Caco-2 (cell line): ENCODE measurements at regions of chr6 and their contacts with region 1.

Region 1: GRCh38 chr6:104795363-104795762 is 64.4 kb downstream of the HACE1 start:
- DNase-seq: peak in 1 of 2 experiments; percentile 28
- H3K4me3 ChIP-seq: no peak overlapping the region
- H3K4me3 Mint-ChIP-seq: no peak overlapping the region
- H3K27ac Mint-ChIP-seq: no peak overlapping the region
- H3K4me1 ChIP-seq: no peaks in the 10 kb centered on the region
- H3K4me1 Mint-ChIP-seq: no peaks in the 10 kb centered on the region
- H3K27me3 ChIP-seq: no peaks in the 10 kb centered on the region
- H3K27me3 Mint-ChIP-seq: no peaks in the 10 kb centered on the region
- CTCF ChIP-seq: no peak

Region 2: DNA sequence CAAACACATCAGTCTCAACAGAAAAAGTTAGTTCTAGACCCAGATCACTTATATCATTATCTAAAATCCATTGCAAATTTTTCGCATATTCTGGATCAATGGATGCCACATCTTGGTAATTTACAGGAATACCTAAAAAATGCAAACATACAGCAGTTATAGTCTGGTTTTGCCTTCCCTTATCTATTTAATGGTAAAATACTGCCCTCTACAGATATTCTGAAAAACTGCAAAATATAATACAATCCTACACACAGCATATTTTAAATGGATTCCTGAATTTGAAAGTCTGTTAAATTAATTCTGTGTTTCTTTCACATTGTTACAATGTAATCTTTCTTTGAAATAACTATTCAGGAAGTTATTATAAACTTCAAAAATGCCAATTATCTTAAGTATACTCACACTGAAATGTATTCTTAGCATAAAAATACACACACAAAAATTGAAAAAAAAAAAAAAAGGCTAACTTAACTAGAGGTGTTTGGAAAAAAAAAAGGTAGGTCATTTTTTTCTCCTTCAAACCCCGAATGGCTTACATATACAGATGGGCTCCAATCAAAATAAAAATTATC is 24.0 kb before region 1 on chr6:
- CTCF ChIA-PET with region 1: no interaction called
- POLR2A ChIA-PET with region 1: no interaction called
- intact Hi-C with region 1: no loop called
- DNase-seq: no peak
- H3K4me3 ChIP-seq: no peak overlapping the region
- H3K4me3 Mint-ChIP-seq: no peak overlapping the region
- H3K27ac Mint-ChIP-seq: no peak overlapping the region
- H3K4me1 ChIP-seq: no peaks in the 10 kb centered on the region
- H3K4me1 Mint-ChIP-seq: no peaks in the 10 kb centered on the region
- H3K27me3 ChIP-seq: no peaks in the 10 kb centered on the region
- H3K27me3 Mint-ChIP-seq: no peaks in the 10 kb centered on the region
- CTCF ChIP-seq: peak; percentile 34 to 52

Region 3: DNA sequence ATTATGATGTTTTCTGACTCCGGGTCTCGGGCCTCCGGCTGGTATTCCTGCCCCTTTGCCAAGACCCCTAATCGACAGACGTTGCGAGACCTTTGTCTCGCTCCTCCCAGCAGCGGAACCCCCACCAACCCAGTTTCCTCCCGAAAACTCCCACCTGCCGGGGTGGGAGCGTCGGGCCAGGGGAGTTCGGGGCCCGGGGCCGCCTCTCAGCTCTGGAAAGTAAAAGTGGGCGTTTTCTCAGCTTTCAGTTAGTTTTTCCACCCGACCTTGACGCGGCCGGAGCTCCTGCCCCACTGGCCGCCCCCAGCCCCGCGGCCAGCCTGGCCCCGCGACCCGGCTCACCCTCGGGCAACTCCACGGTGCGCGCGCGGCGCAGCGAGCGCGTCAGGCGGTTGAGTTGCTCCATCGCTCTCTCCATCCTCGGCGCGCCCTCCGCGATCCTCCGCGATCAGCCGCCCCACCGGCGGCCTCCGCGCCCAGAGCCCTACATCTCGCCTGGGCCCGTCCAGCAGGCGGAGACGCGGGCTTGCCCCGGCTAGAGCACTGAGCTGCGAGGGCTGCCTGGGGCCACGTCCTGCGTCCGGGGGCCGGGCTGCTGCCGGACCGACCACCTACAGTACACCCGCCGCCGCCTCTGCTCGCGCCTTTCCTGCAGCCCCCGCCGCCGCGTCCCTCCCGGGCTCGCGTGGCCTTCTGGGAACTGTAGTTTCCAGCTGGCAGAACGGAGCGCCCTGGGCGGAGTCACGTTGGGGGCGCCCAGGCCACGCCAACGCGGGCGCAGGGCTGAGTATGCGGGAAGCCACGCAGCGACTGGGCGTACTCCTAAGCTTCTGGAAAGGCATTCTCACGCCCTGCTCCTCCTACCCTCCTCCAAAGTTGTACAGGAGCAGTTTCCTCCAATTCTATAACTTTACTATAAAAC is 64.1 kb after region 1 on chr6 and contains the start of gene HACE1:
- CTCF ChIA-PET with region 1: no interaction called
- POLR2A ChIA-PET with region 1: no interaction called
- intact Hi-C with region 1: loop called (anchors 2 kb)
- DNase-seq: peak; percentile 84 to 89
- H3K4me3 ChIP-seq: peak within 1 kb of the TSS; percentile 99
- H3K4me3 Mint-ChIP-seq: peak within 1 kb of the TSS; percentile 82
- H3K27ac Mint-ChIP-seq: no peak within 1 kb of the TSS
- H3K4me1 ChIP-seq: no peaks in the 10 kb centered on the region
- H3K4me1 Mint-ChIP-seq: peaks cover 8% of the 10 kb centered on the region
- H3K27me3 ChIP-seq: no peaks in the 10 kb centered on the region
- H3K27me3 Mint-ChIP-seq: peaks cover 3% of the 10 kb centered on the region
- CTCF ChIP-seq: peak in 1 of 2 experiments; percentile 11
- total RNA-seq, gene HACE1: 10.0 and 13.2 TPM in 2 replicates